A549 (cell line): ENCODE measurements at regions of chr19 and their contacts with region 1.

Region 1: GRCh38 chr19:51422053-51422448 is 4.6 kb upstream of the SIGLEC10 start:
- DNase-seq: peak; percentile 80
- ATAC-seq: peak; percentile 87 to 96
- H3K4me3 ChIP-seq: no peak overlapping the region
- H3K27ac ChIP-seq: no peak overlapping the region
- H3K4me1 ChIP-seq: no peaks in the 10 kb centered on the region
- CTCF ChIP-seq: peak; percentile 83
- EP300 ChIP-seq: no peak
- POLR2A ChIP-seq: no peak
- RAD21 ChIP-seq: peak; percentile 78 to 81

Region 2: GRCh38 chr19:51325161-51325976 is 96.7 kb before region 1 on chr19:
- CTCF ChIA-PET with region 1: no interaction called
- POLR2A ChIA-PET with region 1: no interaction called
- DNase-seq: no peak
- ATAC-seq: peak in 1 of 2 experiments; percentile 15; a peak in 3 of 6 replicates
- H3K4me3 ChIP-seq: no peak overlapping the region
- H3K27ac ChIP-seq: no peak overlapping the region
- H3K4me1 ChIP-seq: peaks cover 14% of the 10 kb centered on the region; the same call in 2 of the 3 replicates
- CTCF ChIP-seq: no peak
- EP300 ChIP-seq: no peak
- POLR2A ChIP-seq: no peak
- RAD21 ChIP-seq: no peak

Region 3: GRCh38 chr19:51407511-51408131 is 14.4 kb before region 1 on chr19:
- CTCF ChIA-PET with region 1: interaction called, 17 read pairs
- POLR2A ChIA-PET with region 1: no interaction called
- DNase-seq: peak; percentile 56 to 72
- ATAC-seq: peak; percentile 82 to 94; a peak in 5 of 6 replicates
- H3K4me3 ChIP-seq: no peak overlapping the region
- H3K27ac ChIP-seq: no peak overlapping the region
- H3K4me1 ChIP-seq: no peaks in the 10 kb centered on the region
- CTCF ChIP-seq: peak; percentile 48; the same call in 2 of the 3 replicates
- EP300 ChIP-seq: no peak
- POLR2A ChIP-seq: no peak
- RAD21 ChIP-seq: peak; percentile 47 to 66; a peak in 4 of 5 replicates

Region 4: DNA sequence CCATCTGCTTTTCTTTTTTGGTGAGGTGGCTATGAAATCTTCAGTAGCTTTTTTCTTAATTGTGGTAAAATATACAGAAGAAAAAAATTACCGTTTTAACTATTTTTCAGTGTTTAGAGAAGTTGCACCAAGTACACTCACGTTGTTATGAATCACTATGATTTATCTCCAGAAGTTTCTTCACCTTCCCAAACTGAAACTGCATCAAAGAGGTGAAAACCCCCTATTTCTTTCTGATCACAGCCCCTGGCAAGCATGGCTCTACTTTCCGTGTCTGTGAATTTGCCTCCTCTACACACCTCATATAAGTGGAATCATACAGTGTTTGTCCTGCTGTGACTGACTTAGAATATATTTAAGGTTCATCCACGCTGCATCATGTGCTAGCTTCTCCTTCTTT is 11.0 kb after region 1 on chr19:
- CTCF ChIA-PET with region 1: interaction called, 10 read pairs
- POLR2A ChIA-PET with region 1: no interaction called
- DNase-seq: no peak
- ATAC-seq: no peak
- H3K4me3 ChIP-seq: no peak overlapping the region
- H3K27ac ChIP-seq: no peak overlapping the region
- H3K4me1 ChIP-seq: no peaks in the 10 kb centered on the region
- CTCF ChIP-seq: no peak
- EP300 ChIP-seq: no peak
- POLR2A ChIP-seq: no peak
- RAD21 ChIP-seq: no peak

Region 5: DNA sequence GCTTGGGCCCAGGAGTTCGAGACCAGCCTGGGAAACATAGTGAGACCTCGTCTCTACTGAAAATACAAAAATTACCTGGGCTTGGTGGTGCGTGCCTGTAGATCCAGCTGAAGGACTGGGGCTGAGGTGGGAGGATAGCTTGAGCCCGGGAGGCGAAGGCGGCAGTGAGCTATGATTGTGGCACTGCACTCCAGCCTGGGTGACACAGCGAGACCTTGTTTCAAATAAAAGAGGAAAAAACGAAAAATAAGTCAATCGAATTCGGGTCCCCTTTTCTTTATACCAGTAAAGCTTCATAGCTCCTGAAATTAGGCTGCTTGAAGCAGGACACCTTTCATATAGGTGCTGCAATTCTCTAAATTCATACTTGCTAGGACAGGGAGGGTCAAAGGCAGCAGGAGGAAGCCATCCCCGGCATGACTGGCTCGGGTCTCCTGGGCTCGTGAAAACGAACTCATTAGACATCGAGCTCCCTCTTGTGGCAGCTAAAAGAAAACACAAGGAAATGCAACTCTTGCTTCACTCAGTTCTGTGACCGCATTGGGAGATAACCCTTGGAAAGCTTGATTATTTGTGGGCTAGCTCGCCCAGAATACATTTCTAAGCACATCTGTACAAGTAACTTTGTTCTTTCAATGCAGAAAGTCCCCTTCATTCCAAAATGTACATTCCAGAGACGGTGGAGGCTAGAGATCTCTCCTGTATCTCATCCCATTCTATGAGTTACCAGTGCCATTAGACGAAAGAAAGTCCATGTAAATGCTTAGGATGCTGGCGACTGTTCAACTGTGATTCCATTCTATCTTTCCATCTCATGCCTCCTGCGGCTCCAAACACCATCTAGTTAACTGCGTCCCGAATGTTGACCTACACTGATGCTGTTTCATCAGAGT is 355.8 kb after region 1 on chr19:
- CTCF ChIA-PET with region 1: interaction called, 11 read pairs
- POLR2A ChIA-PET with region 1: no interaction called
- DNase-seq: peak; percentile 20 to 85
- ATAC-seq: peak; percentile 83 to 91
- H3K4me3 ChIP-seq: no peak overlapping the region
- H3K27ac ChIP-seq: no peak overlapping the region
- H3K4me1 ChIP-seq: no peaks in the 10 kb centered on the region
- CTCF ChIP-seq: peak; percentile 70
- EP300 ChIP-seq: no peak
- POLR2A ChIP-seq: no peak
- RAD21 ChIP-seq: peak; percentile 77 to 81